Naive thymus-derived CD4-positive, alpha-beta T cell (primary cell): ENCODE measurements at regions of chr2 and their contacts with region 1.

Region 1: GRCh38 chr2:232668805-232669444 is 28.2 kb upstream of the GIGYF2 start:
- DNase-seq: no peak
- ATAC-seq: no peak
- H3K4me3 ChIP-seq: no peak overlapping the region
- H3K4me3 Mint-ChIP-seq: no peak overlapping the region
- H3K27ac ChIP-seq: no peak overlapping the region
- H3K27ac Mint-ChIP-seq: no peak overlapping the region
- H3K4me1 ChIP-seq: no peaks in the 10 kb centered on the region
- H3K4me1 Mint-ChIP-seq: no peaks in the 10 kb centered on the region
- H3K27me3 ChIP-seq: no peaks in the 10 kb centered on the region
- H3K27me3 Mint-ChIP-seq: peaks cover 0 to 9% (median 4%) of the 10 kb centered on the region in 5 donors

Region 2: DNA sequence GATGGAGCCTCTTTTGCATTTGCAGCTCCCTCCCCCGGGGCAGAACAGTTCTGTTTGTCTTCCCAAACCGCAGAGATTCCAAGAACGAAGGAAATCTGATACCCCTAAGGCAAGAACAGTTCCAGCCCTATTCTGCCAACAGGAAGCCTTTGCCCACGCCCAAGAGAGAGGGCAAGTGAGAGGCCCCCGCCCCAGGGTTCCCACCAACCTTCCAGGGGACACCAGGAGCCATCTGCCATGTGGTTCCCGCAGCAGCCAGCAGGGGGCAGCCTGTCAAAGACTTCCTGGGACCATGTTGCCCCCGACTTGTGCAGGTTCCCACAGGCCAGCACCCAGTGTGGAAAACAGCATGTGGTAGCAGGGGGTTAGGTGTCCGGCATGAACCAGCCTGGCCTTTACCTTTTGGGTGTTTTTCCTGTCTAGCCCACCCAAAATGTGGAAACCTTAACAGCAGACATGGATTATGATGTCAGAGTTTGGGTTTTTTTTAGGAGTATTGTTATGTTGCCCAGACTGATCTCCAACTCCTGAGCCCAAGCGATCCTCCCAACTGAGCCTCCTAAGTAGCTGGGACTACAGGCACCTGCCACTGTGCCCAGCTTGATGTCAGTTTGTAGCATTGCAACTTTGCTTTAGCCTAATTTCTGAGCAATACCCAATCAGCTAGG is 57.2 kb before region 1 on chr2:
- CTCF ChIA-PET with region 1: interaction called, 3 read pairs
- POLR2A ChIA-PET with region 1: no interaction called
- intact Hi-C with region 1: loop called in 1 of 2 experiments (anchors 1 kb)
- DNase-seq: peak; percentile 18 to 72 (median 48)
- ATAC-seq: peak; percentile 72
- H3K4me3 ChIP-seq: no peak overlapping the region
- H3K4me3 Mint-ChIP-seq: no peak overlapping the region
- H3K27ac ChIP-seq: no peak overlapping the region
- H3K27ac Mint-ChIP-seq: no peak overlapping the region
- H3K4me1 ChIP-seq: no peaks in the 10 kb centered on the region
- H3K4me1 Mint-ChIP-seq: no peaks in the 10 kb centered on the region
- H3K27me3 ChIP-seq: no peaks in the 10 kb centered on the region
- H3K27me3 Mint-ChIP-seq: no peaks in the 10 kb centered on the region